ENCODE measurements at regions of chr14 and their contacts with region 1.

Region 1: DNA sequence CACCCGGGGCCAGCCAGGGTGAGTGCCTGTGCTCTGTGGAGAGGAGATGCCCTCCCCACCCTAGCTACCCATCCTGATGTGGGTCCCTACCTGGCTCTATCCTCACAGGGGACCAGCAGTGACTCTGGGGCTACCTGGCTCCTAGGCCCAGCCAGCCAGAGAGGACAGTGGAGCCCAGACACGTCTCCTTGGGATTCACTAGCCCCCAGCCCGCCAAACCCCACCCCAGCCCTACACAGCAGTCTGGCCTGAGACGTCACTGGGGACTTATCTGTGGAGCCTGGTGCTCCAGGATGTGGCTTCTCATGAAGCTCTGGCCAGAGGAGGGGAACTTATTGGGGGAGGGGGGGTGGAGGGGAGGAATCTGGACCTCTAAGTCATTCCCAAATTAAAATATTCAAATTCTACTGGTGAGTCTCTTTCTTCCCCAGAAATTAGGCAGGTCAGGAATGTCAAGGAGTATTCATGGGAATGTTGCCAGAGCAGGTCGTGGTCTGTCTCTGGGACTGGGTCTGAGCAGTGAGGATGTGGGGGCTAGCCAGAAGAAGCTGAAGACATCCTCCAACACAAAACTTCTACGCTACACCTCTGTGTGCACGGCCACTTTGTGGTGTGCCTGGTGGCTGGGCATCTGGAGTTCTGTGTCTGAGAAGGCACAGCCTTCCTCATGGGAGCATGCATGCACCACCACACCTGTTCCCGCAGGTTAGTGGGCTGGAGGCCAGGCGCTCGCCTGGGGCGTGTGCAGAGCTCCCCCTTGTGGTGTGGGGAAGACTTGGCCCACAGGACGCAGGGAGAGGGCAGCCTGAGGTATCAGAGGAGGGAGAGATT is 2.7 kb downstream of the CMTM5 start:
- DNase-seq: no peak
- H3K4me3 ChIP-seq: no peak overlapping the region
- H3K27ac ChIP-seq: no peak overlapping the region
- H3K4me1 ChIP-seq: no peaks in the 10 kb centered on the region
- H3K27me3 ChIP-seq: no peaks in the 10 kb centered on the region
- CTCF ChIP-seq: peak; percentile 86 to 93 (median 91)
- EP300 ChIP-seq: no peak
- POLR2A ChIP-seq: no peak

Region 2: GRCh38 chr14:23269193-23269592 is 110.4 kb before region 1 on chr14:
- intact Hi-C with region 1: loop called (anchors 5 kb)
- DNase-seq: no peak
- H3K4me3 ChIP-seq: no peak overlapping the region
- H3K27ac ChIP-seq: no peak overlapping the region
- H3K4me1 ChIP-seq: no peaks in the 10 kb centered on the region
- H3K27me3 ChIP-seq: no peaks in the 10 kb centered on the region
- CTCF ChIP-seq: no peak
- EP300 ChIP-seq: no peak
- POLR2A ChIP-seq: no peak

Region 3: GRCh38 chr14:23327947-23328744 is 51.4 kb before region 1 on chr14:
- intact Hi-C with region 1: loop called (anchors 1 kb)
- DNase-seq: peak; percentile 87
- H3K4me3 ChIP-seq: no peak overlapping the region
- H3K27ac ChIP-seq: no peak overlapping the region
- H3K4me1 ChIP-seq: peaks cover 0 to 14% (median 5%) of the 10 kb centered on the region in 4 donors
- H3K27me3 ChIP-seq: no peaks in the 10 kb centered on the region
- CTCF ChIP-seq: peak; percentile 77 to 90 (median 85)
- EP300 ChIP-seq: no peak
- POLR2A ChIP-seq: no peak

Measured in sigmoid colon (tissue), 7 donors.